ENCODE measurements at regions of chr19 and their contacts with region 1.

Region 1: GRCh38 chr19:55516878-55517620 is 19.9 kb downstream of the SBK2 start:
- DNase-seq: peak; percentile 83 to 97
- H3K4me3 ChIP-seq: peak overlapping the region; percentile 60; the same call in 1 of the 2 replicates
- H3K27ac ChIP-seq: no peak overlapping the region
- H3K4me1 ChIP-seq: no peaks in the 10 kb centered on the region
- H3K27me3 ChIP-seq: peaks cover 17% of the 10 kb centered on the region
- CTCF ChIP-seq: peak; percentile 94

Region 2: DNA sequence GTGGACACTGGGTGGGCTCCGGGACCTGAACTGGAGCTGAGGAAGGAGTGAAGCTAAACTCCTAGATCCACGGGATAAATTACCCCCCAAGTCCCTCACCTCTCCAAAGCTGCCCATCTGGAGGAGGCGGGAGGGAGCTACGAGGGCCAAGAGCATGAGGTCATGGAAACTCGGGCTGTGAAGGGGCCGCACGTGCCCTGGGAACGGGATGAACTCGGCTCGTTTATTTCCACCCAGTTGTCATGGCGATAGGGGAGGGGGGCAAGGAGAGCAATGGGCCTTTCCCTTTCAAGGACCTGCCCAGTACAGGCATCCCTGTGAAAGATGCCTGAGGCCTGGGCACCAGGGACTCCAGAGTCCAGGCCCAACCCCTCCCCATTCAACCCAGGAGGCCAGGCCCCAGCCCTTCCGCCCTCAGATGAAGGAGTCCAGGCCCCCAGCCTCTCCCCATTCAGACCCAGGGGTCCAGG is 403.4 kb before region 1 on chr19:
- CTCF ChIA-PET with region 1: no interaction called
- POLR2A ChIA-PET with region 1: no interaction called
- intact Hi-C with region 1: no loop called
- DNase-seq: no peak
- H3K4me3 ChIP-seq: no peak overlapping the region
- H3K27ac ChIP-seq: no peak overlapping the region
- H3K4me1 ChIP-seq: peaks cover 17% of the 10 kb centered on the region
- H3K27me3 ChIP-seq: no peaks in the 10 kb centered on the region
- CTCF ChIP-seq: no peak

Region 3: GRCh38 chr19:55599468-55600279 is 82.6 kb after region 1 on chr19 and contains the start of gene FIZ1:
- CTCF ChIA-PET with region 1: no interaction called
- POLR2A ChIA-PET with region 1: no interaction called
- intact Hi-C with region 1: loop called (anchors 2 kb)
- DNase-seq: peak; percentile 93 to 98
- H3K4me3 ChIP-seq: peak within 1 kb of the TSS; percentile 91
- H3K27ac ChIP-seq: peak within 1 kb of the TSS; percentile 94
- H3K4me1 ChIP-seq: peaks cover 22% of the 10 kb centered on the region
- H3K27me3 ChIP-seq: no peaks in the 10 kb centered on the region
- CTCF ChIP-seq: 0 out of 2 replicates have a peak, but pooled peaks have one; percentile 16
- total RNA-seq, gene FIZ1: 25.2 and 25.4 TPM in 2 replicates

Region 4: GRCh38 chr19:55605207-55605636 is 88.2 kb after region 1 on chr19:
- CTCF ChIA-PET with region 1: interaction called, 4 read pairs
- POLR2A ChIA-PET with region 1: no interaction called
- intact Hi-C with region 1: loop called (anchors 1 kb)
- DNase-seq: peak; percentile 93 to 100
- H3K4me3 ChIP-seq: peak overlapping the region; percentile 79
- H3K27ac ChIP-seq: peak overlapping the region; percentile 66
- H3K4me1 ChIP-seq: peaks cover 29% of the 10 kb centered on the region
- H3K27me3 ChIP-seq: no peaks in the 10 kb centered on the region
- CTCF ChIP-seq: no peak

Measured in PC-9 (cell line).